Endothelial cell of umbilical vein (primary cell): ENCODE measurements at regions of chr1 and their contacts with region 1.

Region 1: DNA sequence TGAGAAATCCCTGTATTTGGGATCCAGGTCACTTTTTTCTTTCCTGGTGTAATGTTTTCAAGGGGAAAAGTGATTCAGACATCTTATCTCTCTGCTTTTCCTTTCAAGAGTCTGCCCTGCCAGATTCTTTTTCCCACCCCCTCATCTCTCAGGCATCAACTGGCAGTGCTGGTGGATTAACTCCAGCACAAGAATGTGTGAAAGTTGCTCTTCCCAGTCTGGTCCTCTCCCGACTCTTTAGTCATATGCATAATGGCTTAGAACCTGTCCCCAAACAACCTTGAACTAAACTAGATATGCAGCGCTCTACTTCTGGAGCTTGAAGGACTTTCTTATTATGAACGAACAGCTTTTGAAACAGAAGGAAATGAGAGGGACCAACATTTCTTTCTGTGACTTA is 88.5 kb downstream of the SLC44A5 start:
- DNase-seq: peak; percentile 93
- H3K4me3 ChIP-seq: peak overlapping the region in 1 of 3 experiments; percentile 28
- H3K27ac ChIP-seq: peak overlapping the region; percentile 77
- H3K4me1 ChIP-seq: peaks cover 29% of the 10 kb centered on the region
- H3K27me3 ChIP-seq: no peaks in the 10 kb centered on the region
- CTCF ChIP-seq: no peak
- POLR2A ChIP-seq: peak; percentile 26

Region 2: DNA sequence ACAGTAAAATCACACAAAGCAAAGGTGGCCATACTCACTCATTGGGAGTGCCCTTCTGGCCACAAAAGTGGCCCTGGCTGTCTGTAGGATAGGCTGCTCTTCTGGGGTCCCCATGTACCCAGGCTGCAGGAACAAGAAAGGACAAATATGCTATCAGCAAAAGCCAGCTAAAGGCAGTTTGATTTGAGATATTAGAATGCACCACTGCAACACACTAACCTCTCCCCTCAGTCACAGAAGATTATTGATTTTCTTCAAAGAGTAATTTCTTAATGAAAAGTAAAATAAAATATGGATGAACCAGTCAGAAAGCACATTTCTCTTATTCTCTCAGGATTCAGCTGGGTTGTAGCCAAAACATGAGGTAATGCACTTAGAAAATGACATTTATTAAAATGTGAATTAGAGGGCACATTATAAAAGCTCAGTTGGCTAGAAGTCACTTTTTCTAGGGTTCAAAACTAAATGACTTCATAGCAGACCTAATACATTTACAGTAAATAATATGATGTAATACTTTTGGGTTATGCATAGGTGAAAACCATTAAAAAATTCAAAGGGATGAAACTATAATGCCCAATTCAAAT is 247.4 kb before region 1 on chr1:
- CTCF ChIA-PET with region 1: no interaction called
- POLR2A ChIA-PET with region 1: no interaction called
- dilution Hi-C with region 1: no loop called
- intact Hi-C with region 1: no loop called
- DNase-seq: no peak
- H3K4me3 ChIP-seq: no peak overlapping the region
- H3K27ac ChIP-seq: no peak overlapping the region
- H3K4me1 ChIP-seq: no peaks in the 10 kb centered on the region
- H3K27me3 ChIP-seq: no peaks in the 10 kb centered on the region
- CTCF ChIP-seq: no peak
- POLR2A ChIP-seq: no peak

Region 3: GRCh38 chr1:75548721-75549480 is 26.5 kb after region 1 on chr1:
- CTCF ChIA-PET with region 1: no interaction called
- POLR2A ChIA-PET with region 1: no interaction called
- dilution Hi-C with region 1: no loop called
- intact Hi-C with region 1: loop called (anchors 1 kb)
- DNase-seq: peak; percentile 86
- H3K4me3 ChIP-seq: no peak overlapping the region
- H3K27ac ChIP-seq: peak overlapping the region; percentile 23
- H3K4me1 ChIP-seq: peaks cover 30% of the 10 kb centered on the region
- H3K27me3 ChIP-seq: no peaks in the 10 kb centered on the region
- CTCF ChIP-seq: no peak
- POLR2A ChIP-seq: no peak